Activated CD8-positive, alpha-beta T cell treated with anti-CD3 and anti-CD28 coated beads, Interleukin-2, amount 10 ng/mL, durations not matched to agents 7 days and 5 days (primary cell): ENCODE measurements at regions of chr16 and their contacts with region 1.

Region 1: GRCh38 chr16:5633845-5634440 is 536.3 kb upstream of the EEF2KMT start:
- DNase-seq: no peak
- ATAC-seq: no peak
- H3K4me3 Mint-ChIP-seq: no peak overlapping the region
- H3K27ac Mint-ChIP-seq: no peak overlapping the region
- H3K4me1 Mint-ChIP-seq: no peaks in the 10 kb centered on the region
- H3K27me3 Mint-ChIP-seq: no peaks in the 10 kb centered on the region

Region 2: DNA sequence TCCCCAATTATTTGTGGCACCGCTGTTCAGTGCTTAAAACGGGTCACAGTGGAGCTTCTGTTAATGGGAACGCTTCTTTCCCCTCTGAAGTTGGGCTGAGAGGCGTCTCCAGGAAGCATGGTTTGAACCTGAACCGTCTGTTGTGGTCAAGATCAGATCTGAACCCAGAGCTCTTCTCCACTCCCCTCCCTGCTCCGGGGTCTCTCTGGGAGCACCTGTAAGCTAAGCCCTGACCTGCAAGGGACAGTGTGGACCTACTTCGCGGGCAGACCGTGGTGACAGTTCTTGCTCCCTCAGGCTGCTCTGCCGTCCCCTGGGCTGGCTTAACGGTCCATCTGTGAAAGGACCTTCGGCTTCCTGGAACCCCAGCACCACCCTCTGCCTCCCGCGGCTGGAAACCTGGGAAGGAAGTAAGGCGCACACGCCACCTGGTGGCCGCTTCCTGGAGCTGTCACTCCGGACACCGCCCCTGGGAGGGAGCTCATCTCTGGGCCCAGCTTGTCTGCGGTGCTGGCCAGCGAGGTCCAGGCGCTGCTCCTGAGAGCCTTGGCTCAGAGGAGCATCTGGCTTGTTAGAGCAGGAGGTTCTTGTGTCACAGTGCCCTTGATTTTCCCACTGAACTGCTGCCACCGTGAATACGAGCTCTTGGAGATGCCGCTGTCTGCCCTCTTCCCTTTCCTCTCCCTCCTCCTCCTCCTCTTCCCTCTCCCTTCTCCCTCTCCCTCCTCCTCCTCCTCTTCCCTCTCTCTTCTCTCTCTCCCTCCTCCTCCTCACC is 17.9 kb before region 1 on chr16:
- CTCF ChIA-PET with region 1: interaction called, 12 read pairs
- POLR2A ChIA-PET with region 1: no interaction called
- DNase-seq: peak; percentile 52
- ATAC-seq: peak; percentile 79
- H3K4me3 Mint-ChIP-seq: peak overlapping the region; percentile 18
- H3K27ac Mint-ChIP-seq: peak overlapping the region; percentile 46
- H3K4me1 Mint-ChIP-seq: peaks cover 3% of the 10 kb centered on the region
- H3K27me3 Mint-ChIP-seq: no peaks in the 10 kb centered on the region